HepG2 (cell line): ENCODE measurements at regions of chr2 and their contacts with region 1.

Region 1: GRCh38 chr2:35428548-35428947 is 927.0 kb upstream of the CRIM1 start:
- DNase-seq: peak; percentile 25
- ATAC-seq: peak; percentile 82
- H3K4me3 ChIP-seq: no peak overlapping the region
- H3K27ac ChIP-seq: no peak overlapping the region
- H3K4me1 ChIP-seq: no peaks in the 10 kb centered on the region
- H3K27me3 ChIP-seq: no peaks in the 10 kb centered on the region
- CTCF ChIP-seq: peak; percentile 64
- EP300 ChIP-seq: no peak
- POLR2A ChIP-seq: no peak
- RAD21 ChIP-seq: no peak

Region 2: GRCh38 chr2:34012715-34013302 is 1415.7 kb before region 1 on chr2:
- CTCF ChIA-PET with region 1: interaction called, 3 read pairs
- POLR2A ChIA-PET with region 1: no interaction called
- in situ Hi-C with region 1: no loop called
- intact Hi-C with region 1: loop called (anchors 1 kb)
- DNase-seq: peak; percentile 53
- ATAC-seq: peak; percentile 98
- H3K4me3 ChIP-seq: no peak overlapping the region
- H3K27ac ChIP-seq: no peak overlapping the region
- H3K4me1 ChIP-seq: no peaks in the 10 kb centered on the region
- H3K27me3 ChIP-seq: no peaks in the 10 kb centered on the region
- CTCF ChIP-seq: peak; percentile 85
- EP300 ChIP-seq: no peak
- POLR2A ChIP-seq: no peak
- RAD21 ChIP-seq: peak; percentile 68

Region 3: GRCh38 chr2:34096562-34097171 is 1331.9 kb before region 1 on chr2:
- CTCF ChIA-PET with region 1: no interaction called
- POLR2A ChIA-PET with region 1: no interaction called
- in situ Hi-C with region 1: no loop called
- intact Hi-C with region 1: loop called (anchors 1 kb)
- DNase-seq: peak; percentile 53
- ATAC-seq: peak; percentile 93
- H3K4me3 ChIP-seq: no peak overlapping the region
- H3K27ac ChIP-seq: no peak overlapping the region
- H3K4me1 ChIP-seq: no peaks in the 10 kb centered on the region
- H3K27me3 ChIP-seq: no peaks in the 10 kb centered on the region
- CTCF ChIP-seq: peak; percentile 81
- EP300 ChIP-seq: no peak
- POLR2A ChIP-seq: no peak
- RAD21 ChIP-seq: peak; percentile 52; the same call in 1 of the 2 replicates

Region 4: DNA sequence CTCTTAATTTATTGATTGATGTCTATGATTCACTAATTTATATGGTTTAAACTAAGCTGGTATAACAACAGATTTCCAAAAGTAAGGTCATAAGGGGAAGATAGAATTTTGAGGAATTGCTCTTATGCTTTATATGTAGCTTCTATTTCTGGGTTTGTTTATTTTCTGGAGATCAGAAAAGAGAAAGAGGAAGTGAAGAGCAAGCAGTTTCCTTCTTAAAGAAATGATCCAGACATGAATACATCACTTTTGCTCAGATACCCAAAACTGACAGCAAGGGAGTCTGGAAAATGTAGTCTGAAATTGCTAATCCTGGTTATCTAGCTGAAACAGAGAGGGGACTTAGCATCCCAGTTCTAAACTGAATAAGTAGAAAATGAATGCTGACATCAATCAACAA is 14.5 kb after region 1 on chr2:
- CTCF ChIA-PET with region 1: no interaction called
- POLR2A ChIA-PET with region 1: no interaction called
- in situ Hi-C with region 1: no loop called
- intact Hi-C with region 1: no loop called
- DNase-seq: no peak
- ATAC-seq: no peak
- H3K4me3 ChIP-seq: no peak overlapping the region
- H3K27ac ChIP-seq: no peak overlapping the region
- H3K4me1 ChIP-seq: no peaks in the 10 kb centered on the region
- H3K27me3 ChIP-seq: no peaks in the 10 kb centered on the region
- CTCF ChIP-seq: no peak
- EP300 ChIP-seq: no peak
- POLR2A ChIP-seq: no peak
- RAD21 ChIP-seq: no peak

Region 5: GRCh38 chr2:35585972-35586371 is 157.4 kb after region 1 on chr2:
- CTCF ChIA-PET with region 1: no interaction called
- POLR2A ChIA-PET with region 1: no interaction called
- in situ Hi-C with region 1: no loop called
- intact Hi-C with region 1: no loop called
- DNase-seq: no peak
- ATAC-seq: no peak
- H3K4me3 ChIP-seq: no peak overlapping the region
- H3K27ac ChIP-seq: no peak overlapping the region
- H3K4me1 ChIP-seq: no peaks in the 10 kb centered on the region
- H3K27me3 ChIP-seq: no peaks in the 10 kb centered on the region
- CTCF ChIP-seq: no peak
- EP300 ChIP-seq: no peak
- POLR2A ChIP-seq: no peak
- RAD21 ChIP-seq: no peak